ENCODE measurements at regions of chr3 and their contacts with region 1.

Region 1: GRCh38 chr3:15253023-15253697 is 47.1 kb downstream of the CAPN7 start:
- H3K4me3 Mint-ChIP-seq: no peak overlapping the region
- H3K27ac Mint-ChIP-seq: no peak overlapping the region
- H3K4me1 Mint-ChIP-seq: no peaks in the 10 kb centered on the region
- H3K27me3 Mint-ChIP-seq: no peaks in the 10 kb centered on the region

Region 2: DNA sequence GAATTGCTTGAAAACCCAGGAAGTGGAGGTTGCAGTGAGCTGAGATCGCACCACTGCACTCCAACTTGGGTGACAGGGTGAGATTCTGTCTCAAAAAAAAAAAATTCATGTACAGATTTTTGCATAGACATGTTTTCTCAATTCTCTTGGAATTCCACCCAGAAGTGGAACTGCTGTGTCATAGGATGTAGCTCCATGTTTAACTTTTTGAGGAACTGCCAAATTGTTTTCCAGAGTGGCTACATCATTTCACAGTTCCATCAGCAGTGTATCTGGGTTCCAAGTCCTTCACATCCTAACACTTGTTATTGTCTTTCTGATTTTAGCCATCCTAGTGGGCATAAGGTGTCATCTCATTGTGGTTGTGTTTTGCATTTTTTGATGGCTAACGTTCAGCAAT is 37.2 kb before region 1 on chr3:
- intact Hi-C with region 1: loop called (anchors 5 kb)
- H3K4me3 Mint-ChIP-seq: no peak overlapping the region
- H3K27ac Mint-ChIP-seq: peak overlapping the region; percentile 39
- H3K4me1 Mint-ChIP-seq: peaks cover 33% of the 10 kb centered on the region
- H3K27me3 Mint-ChIP-seq: no peaks in the 10 kb centered on the region

Region 3: GRCh38 chr3:15229262-15229661 is 23.9 kb before region 1 on chr3:
- intact Hi-C with region 1: no loop called
- H3K4me3 Mint-ChIP-seq: no peak overlapping the region
- H3K27ac Mint-ChIP-seq: no peak overlapping the region
- H3K4me1 Mint-ChIP-seq: no peaks in the 10 kb centered on the region
- H3K27me3 Mint-ChIP-seq: no peaks in the 10 kb centered on the region